ENCODE measurements at regions of chr1 and their contacts with region 1.

Region 1: DNA sequence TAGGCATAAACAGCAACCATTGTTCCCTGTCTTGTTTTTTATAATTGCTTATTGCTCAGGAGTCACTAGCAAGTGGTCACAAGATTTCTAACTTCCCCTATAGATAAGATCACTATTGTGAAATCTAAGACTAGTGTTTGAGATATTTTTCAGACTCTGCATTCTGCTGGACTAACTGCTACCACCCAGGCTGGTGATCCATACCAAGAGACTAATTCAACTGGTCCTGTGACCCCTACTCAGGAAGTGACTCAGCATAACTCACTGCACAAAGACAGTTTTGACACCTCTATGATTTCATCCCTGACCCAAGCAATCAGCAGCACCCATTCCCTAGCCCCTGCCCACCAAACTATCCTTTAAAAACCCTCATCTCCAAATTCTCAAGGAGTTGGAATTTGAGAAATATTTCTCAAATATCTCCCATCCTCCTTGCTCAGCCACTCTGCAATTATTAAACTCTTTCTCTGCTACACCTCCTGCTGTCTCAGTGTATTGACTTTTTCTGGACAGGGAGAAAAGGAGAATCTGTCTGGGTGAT is 52.7 kb downstream of the TRIM33 start:
- DNase-seq: no peak
- ATAC-seq: peak in 1 of 2 donors; percentile 43
- H3K4me3 ChIP-seq: no peak overlapping the region
- H3K27ac ChIP-seq: no peak overlapping the region
- H3K4me1 ChIP-seq: peaks cover 5% of the 10 kb centered on the region
- H3K27me3 ChIP-seq: no peaks in the 10 kb centered on the region

Region 2: GRCh38 chr1:114490274-114490693 is 32.0 kb after region 1 on chr1:
- intact Hi-C with region 1: no loop called
- DNase-seq: no peak
- ATAC-seq: no peak
- H3K4me3 ChIP-seq: no peak overlapping the region
- H3K27ac ChIP-seq: no peak overlapping the region
- H3K4me1 ChIP-seq: peaks cover 5% of the 10 kb centered on the region
- H3K27me3 ChIP-seq: no peaks in the 10 kb centered on the region

Region 3: DNA sequence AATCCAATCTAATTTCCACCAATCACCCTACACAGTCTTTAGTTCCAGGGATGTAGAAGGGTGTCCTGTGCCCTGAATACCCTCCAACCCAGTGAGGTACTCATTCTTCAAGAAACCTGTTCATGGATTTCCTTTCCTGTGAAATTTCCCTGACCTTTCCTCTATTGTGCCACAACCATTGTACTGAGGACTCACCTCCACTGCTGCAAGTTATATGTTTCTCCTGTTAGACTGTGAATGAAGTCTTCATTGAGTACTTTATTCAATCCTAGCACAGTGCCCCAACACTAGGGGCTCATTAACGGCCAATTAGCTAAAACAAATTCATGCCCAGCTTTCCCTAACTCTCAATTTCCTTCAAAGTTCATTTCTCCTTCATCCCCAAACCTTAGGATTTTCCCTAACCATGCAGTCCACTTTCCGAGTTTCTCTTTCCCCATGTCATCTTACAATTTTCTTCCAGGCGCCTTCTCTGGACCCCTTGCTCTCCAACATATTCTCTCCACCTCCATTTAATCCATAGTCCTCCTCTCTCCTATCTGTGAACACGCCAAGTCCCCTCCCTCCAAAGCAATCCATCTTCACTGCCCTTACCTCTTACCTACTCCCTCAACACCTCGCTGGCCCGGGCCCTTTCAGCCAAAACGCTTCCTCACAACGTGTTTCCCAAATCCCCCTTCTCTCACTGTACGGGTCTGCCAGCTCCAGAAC is 51.4 kb after region 1 on chr1:
- intact Hi-C with region 1: loop called in 1 of 4 experiments (anchors 10 kb)
- DNase-seq: no peak
- ATAC-seq: no peak
- H3K4me3 ChIP-seq: peak overlapping the region; percentile 65
- H3K27ac ChIP-seq: no peak overlapping the region
- H3K4me1 ChIP-seq: peaks cover 9% of the 10 kb centered on the region
- H3K27me3 ChIP-seq: no peaks in the 10 kb centered on the region

Measured in right cardiac atrium (tissue), 5 donors.